Spleen (tissue), 13 donors: ENCODE measurements at regions of chr2 and their contacts with region 1.

Region 1: GRCh38 chr2:100381240-100381639 is 36.2 kb downstream of the CHST10 start:
- DNase-seq: peak; percentile 71
- H3K4me3 ChIP-seq: no peak overlapping the region
- H3K27ac ChIP-seq: no peak overlapping the region
- H3K4me1 ChIP-seq: peaks cover 0 to 3% (median 0%) of the 10 kb centered on the region in 6 donors
- H3K27me3 ChIP-seq: no peaks in the 10 kb centered on the region
- CTCF ChIP-seq: peak; percentile 60 to 88 (median 82)
- POLR2A ChIP-seq: no peak

Region 2: GRCh38 chr2:100146657-100146960 is 234.6 kb before region 1 on chr2:
- intact Hi-C with region 1: no loop called
- DNase-seq: no peak
- H3K4me3 ChIP-seq: no peak overlapping the region
- H3K27ac ChIP-seq: no peak overlapping the region
- H3K4me1 ChIP-seq: peaks cover 0 to 25% (median 3%) of the 10 kb centered on the region in 6 donors
- H3K27me3 ChIP-seq: no peaks in the 10 kb centered on the region
- CTCF ChIP-seq: no peak
- POLR2A ChIP-seq: no peak

Region 3: GRCh38 chr2:100272841-100273329 is 108.4 kb before region 1 on chr2:
- intact Hi-C with region 1: loop called (anchors 5 kb)
- DNase-seq: no peak
- H3K4me3 ChIP-seq: no peak overlapping the region
- H3K27ac ChIP-seq: peak overlapping the region in 4 of 8 donors; percentile 2 to 55 (median 30)
- H3K4me1 ChIP-seq: no peaks in the 10 kb centered on the region
- H3K27me3 ChIP-seq: peaks cover 0 to 3% (median 0%) of the 10 kb centered on the region in 7 donors
- CTCF ChIP-seq: no peak
- POLR2A ChIP-seq: no peak